ENCODE measurements at regions of chr14 and their contacts with region 1.

Region 1: DNA sequence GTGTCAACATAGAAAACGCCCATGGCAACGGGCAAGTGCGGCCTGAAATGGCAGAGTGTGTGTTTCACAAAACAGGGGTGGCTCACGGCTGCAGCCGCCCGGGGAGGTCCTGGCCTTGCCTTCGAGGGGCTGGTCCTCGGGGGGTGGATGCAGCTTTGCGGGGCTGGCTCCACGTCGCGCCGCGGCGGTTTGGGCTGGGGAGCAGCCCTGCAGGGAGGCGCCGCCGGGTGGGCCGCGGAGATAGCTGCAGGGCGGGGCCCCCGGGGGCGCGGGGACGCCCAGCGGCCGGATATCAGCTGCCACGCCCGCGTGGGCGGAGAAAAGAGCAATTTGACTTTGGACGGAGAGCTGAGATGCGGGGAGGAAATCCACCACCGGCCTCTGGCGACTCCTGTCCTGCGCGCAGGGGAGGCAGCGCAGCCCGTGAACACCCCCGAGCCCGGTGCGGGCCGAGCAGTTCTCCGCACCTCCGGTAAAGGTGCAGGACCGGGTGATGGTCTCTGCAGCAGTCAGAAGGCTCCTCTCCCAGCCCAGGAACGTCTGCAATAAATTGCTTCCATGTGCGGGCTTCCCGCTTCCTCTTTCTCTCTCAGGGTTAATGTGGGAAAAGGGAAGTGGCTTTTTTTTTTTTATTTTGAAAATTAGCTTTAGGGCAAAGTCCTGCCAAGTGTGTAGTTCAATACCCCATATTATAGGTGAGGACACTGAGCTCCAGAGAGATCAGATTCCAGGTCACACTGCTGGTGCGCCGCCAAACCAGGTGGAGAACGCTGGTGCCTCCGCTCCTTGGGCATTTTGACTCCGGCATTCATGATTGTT is 110.5 kb downstream of the ARF6 start:
- DNase-seq: peak; percentile 85
- ATAC-seq: peak; percentile 65
- H3K4me3 Mint-ChIP-seq: peak overlapping the region; percentile 83
- H3K27ac Mint-ChIP-seq: peak overlapping the region; percentile 95
- H3K4me1 Mint-ChIP-seq: peaks cover 79% of the 10 kb centered on the region
- H3K27me3 Mint-ChIP-seq: no peaks in the 10 kb centered on the region
- CTCF ChIP-seq: no peak

Region 2: DNA sequence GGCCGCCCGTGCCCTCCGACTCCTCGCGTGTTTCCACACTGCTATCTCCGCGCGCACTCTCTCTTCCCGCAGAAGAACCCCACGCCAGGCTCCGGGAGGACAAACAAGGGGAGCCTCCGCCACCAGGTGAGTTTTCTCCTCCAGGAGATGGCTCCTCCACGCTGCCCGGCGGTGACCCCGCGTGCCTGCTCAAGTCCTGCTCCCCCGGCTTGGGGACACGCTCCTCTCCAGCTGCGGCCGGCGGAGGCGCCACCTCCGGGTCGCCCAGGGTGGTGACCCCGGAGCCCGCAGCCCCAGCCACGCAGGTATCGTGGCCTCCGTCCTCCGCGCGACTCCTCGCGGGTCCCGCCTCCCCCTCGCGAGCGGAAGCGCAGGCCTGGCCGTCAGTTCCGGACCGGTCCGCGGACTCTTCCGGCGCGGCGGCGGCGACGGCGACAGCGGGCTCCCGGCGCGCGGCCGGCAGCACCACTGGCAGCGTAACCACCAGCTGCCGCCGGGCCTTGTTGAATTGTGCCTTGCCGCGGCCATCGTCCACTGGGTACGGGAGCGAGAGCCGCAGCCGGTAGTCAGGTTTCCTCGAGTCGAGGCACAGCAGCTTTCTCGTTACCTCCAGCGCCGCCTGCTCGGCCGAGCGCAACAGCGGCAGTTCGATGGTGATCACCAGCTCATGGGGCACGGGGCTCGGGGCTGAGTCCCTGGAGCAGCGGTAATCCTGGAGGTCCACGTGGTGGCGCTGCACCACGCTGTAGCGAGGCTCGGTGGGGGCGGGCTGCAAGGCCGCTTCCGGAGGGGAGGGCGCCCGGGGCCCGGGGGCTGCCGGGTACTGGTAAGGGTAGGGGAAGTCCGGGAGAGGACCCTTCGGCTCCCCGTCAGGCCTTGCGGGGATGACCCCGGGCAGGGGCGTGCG is 369.5 kb before region 1 on chr14:
- CTCF ChIA-PET with region 1: no interaction called
- POLR2A ChIA-PET with region 1: no interaction called
- intact Hi-C with region 1: loop called (anchors 1 kb)
- DNase-seq: peak; percentile 92
- ATAC-seq: peak; percentile 80
- H3K4me3 Mint-ChIP-seq: peak overlapping the region; percentile 96
- H3K27ac Mint-ChIP-seq: peak overlapping the region; percentile 98
- H3K4me1 Mint-ChIP-seq: peaks cover 66% of the 10 kb centered on the region
- H3K27me3 Mint-ChIP-seq: no peaks in the 10 kb centered on the region
- CTCF ChIP-seq: no peak

Region 3: GRCh38 chr14:49879683-49880204 is 123.7 kb before region 1 on chr14:
- CTCF ChIA-PET with region 1: interaction called, 8 read pairs
- POLR2A ChIA-PET with region 1: interaction called, 11 read pairs
- intact Hi-C with region 1: no loop called
- DNase-seq: no peak
- ATAC-seq: peak; percentile 90
- H3K4me3 Mint-ChIP-seq: no peak overlapping the region
- H3K27ac Mint-ChIP-seq: peak overlapping the region; percentile 47
- H3K4me1 Mint-ChIP-seq: peaks cover 14% of the 10 kb centered on the region
- H3K27me3 Mint-ChIP-seq: no peaks in the 10 kb centered on the region
- CTCF ChIP-seq: no peak

Region 4: GRCh38 chr14:49954171-49954631 is 49.2 kb before region 1 on chr14:
- CTCF ChIA-PET with region 1: interaction called, 7 read pairs
- POLR2A ChIA-PET with region 1: interaction called, 42 read pairs
- intact Hi-C with region 1: no loop called
- DNase-seq: no peak
- ATAC-seq: no peak
- H3K4me3 Mint-ChIP-seq: no peak overlapping the region
- H3K27ac Mint-ChIP-seq: no peak overlapping the region
- H3K4me1 Mint-ChIP-seq: peaks cover 33% of the 10 kb centered on the region
- H3K27me3 Mint-ChIP-seq: no peaks in the 10 kb centered on the region
- CTCF ChIP-seq: no peak

Region 5: DNA sequence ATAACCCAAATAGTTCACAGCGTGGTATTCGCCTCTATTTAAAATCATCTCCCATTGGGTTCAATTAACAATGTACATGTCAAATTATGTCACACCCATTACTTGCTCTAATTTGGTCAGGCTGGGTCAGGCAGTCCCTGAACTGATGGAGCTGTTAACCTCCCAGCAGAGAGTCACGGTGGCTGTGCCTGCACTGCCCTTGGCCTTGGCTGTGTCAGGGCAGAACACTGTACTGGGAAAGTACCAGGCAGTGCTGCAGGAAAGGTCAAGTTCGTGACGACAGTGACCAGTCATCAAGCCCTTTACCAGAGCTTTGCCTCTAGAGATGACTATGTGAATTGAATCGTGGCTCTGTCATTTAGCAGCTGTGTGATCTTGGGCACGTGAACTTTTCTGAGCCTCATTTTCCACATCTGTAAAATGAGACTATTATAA is 10.5 kb before region 1 on chr14:
- CTCF ChIA-PET with region 1: interaction called, 3 read pairs
- POLR2A ChIA-PET with region 1: interaction called, 20 read pairs
- intact Hi-C with region 1: loop called (anchors 1 kb)
- DNase-seq: no peak
- ATAC-seq: peak; percentile 88
- H3K4me3 Mint-ChIP-seq: peak overlapping the region; percentile 73
- H3K27ac Mint-ChIP-seq: peak overlapping the region; percentile 90
- H3K4me1 Mint-ChIP-seq: peaks cover 36% of the 10 kb centered on the region
- H3K27me3 Mint-ChIP-seq: no peaks in the 10 kb centered on the region
- CTCF ChIP-seq: no peak

Region 6: DNA sequence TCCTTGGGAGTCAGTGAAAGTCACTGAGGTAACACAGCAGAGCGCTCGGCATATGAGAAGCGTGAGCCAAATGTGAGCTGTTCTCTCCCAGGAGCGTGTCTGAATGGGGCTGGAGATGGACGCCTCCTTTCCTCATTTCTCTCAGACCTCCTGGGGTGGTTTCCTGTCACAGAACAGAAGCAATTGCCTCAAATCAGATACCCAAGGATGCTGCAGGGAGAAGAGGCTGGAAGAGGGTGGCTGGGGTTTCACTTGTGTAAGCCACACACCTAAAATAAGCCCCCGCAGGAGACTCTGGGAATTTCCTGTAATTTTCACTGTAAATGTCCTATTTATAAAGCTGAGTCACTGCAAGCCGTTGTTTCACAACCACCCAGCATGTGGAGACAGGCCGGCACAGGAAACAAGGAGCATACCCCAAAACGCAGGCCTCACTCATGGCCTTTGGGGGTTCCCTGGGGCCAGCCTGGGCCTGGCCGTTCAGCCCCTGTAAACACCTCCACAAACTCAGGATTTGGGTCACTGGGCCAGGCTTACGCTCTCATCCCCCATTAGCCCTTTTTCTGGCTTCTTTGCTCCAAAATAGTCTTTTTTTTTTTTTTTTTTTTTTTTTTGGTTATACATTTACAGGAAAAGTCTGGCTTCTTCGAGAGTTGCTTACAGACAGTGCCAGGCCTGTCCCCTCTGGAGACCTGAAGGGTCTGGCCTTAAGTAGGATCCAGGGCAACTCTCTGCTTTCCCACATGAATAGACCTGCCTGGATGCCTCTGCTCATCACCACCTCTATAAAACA is 57.6 kb after region 1 on chr14:
- CTCF ChIA-PET with region 1: interaction called, 30 read pairs
- POLR2A ChIA-PET with region 1: interaction called, 143 read pairs
- intact Hi-C with region 1: loop called (anchors 1 kb)
- DNase-seq: no peak
- ATAC-seq: peak; percentile 0
- H3K4me3 Mint-ChIP-seq: peak overlapping the region; percentile 87
- H3K27ac Mint-ChIP-seq: peak overlapping the region; percentile 100
- H3K4me1 Mint-ChIP-seq: peaks cover 88% of the 10 kb centered on the region
- H3K27me3 Mint-ChIP-seq: no peaks in the 10 kb centered on the region
- CTCF ChIP-seq: no peak

Region 7: GRCh38 chr14:50116181-50116956 is 112.9 kb after region 1 on chr14 and contains the start of gene VCPKMT:
- CTCF ChIA-PET with region 1: interaction called, 4 read pairs
- POLR2A ChIA-PET with region 1: interaction called, 11 read pairs
- intact Hi-C with region 1: no loop called
- DNase-seq: peak; percentile 97
- ATAC-seq: peak; percentile 96
- H3K4me3 Mint-ChIP-seq: peak within 1 kb of the TSS; percentile 95
- H3K27ac Mint-ChIP-seq: peak within 1 kb of the TSS; percentile 97
- H3K4me1 Mint-ChIP-seq: peaks cover 51% of the 10 kb centered on the region
- H3K27me3 Mint-ChIP-seq: no peaks in the 10 kb centered on the region
- CTCF ChIP-seq: no peak
- total RNA-seq, gene VCPKMT: 19.9 and 20.8 TPM in 2 replicates